ENCODE measurements at regions of chr16 and their contacts with region 1.

Region 1: DNA sequence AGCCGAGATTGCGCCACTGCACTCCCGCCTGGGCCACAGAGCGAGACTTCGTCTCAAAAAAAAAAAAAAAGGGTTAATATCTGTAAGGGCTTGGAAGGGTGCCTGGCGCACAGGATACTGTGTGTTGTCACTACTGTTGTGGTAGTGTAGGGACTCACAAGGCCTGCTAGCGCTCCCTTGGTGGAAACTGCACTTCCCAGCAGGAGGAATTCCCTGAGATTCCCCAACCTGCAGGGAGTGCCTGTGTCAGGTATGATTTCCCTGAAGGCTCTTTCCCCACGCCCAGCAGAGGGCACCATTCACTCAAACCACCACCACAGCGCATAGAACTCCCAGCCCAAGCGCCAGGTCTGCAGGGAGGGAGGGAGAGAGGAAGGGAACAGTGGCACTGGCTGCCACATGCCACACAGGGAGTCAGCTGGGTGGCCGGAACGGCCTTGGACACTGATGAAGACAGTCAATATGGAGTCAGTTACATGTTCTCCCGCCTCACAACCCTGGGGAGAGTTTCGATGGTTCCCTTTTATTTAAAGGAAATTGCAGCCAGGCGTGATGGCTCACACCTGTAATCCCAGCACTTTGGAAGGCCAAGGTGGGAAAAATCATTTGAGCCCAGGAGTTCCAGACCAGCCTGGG is 32.7 kb upstream of the CDH1 start:
- DNase-seq: peak; percentile 87
- H3K4me3 Mint-ChIP-seq: no peak overlapping the region
- H3K27ac Mint-ChIP-seq: no peak overlapping the region
- H3K4me1 Mint-ChIP-seq: peaks cover 2% of the 10 kb centered on the region
- H3K27me3 Mint-ChIP-seq: no peaks in the 10 kb centered on the region

Region 2: DNA sequence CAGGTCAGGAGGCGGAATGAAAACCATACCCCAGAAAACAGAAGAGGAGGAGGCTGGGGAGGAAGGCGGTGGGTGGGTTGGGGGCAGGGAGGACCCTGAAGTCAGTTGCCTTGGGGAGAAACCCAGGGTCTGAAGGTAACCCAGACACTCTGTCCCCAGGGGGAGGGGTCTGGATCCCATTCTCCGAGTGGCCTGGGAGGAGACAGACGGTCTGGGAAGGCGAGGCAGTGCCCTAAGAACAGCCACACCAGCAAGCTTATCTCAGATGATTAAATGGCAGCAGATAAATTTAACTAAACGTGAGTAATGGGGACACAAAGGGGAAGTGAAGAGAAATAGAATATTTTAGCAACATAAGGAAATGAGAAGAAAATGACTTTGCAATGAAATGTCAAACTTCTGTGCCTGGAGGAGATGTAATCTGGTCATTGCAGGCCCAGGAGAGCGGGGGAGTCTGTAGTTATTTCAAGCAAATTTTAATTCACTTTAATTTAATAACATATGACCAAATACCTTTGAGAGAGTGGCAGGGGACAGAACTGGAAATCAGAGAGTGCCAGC is 186.7 kb before region 1 on chr16:
- intact Hi-C with region 1: no loop called
- DNase-seq: no peak
- H3K4me3 Mint-ChIP-seq: no peak overlapping the region
- H3K27ac Mint-ChIP-seq: no peak overlapping the region
- H3K4me1 Mint-ChIP-seq: peaks cover 6% of the 10 kb centered on the region
- H3K27me3 Mint-ChIP-seq: peaks cover 14% of the 10 kb centered on the region

Region 3: DNA sequence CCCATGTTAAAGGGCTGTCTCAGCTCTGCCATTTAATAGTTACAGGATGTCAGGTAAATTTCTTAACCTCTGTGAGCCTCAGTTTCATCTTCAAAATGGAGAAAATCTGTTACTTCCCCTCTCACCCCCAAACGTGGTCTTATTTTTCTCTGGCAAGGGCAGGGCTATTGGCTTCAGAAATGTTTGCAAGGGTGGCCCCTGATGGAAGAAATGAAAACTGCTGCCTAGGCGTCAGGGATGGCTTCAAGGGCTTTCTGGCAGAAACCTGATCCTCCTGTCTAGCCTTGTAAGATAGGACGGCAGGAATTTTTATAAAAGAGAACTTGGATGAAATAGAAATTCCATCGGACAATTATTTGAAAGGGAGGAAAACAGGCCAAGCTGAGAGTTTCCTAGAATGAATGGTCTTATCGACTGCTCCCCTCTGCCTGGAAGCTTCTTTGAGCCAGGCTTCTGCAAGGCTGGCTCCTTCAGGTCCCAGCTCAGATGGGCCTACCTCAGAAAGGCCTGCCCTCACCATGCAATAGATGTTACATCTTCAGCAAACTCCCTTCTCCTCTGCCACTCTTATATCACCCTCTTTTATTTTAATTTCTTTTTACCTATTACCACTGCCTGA is 96.0 kb after region 1 on chr16:
- intact Hi-C with region 1: loop called (anchors 1 kb)
- DNase-seq: peak; percentile 87
- H3K4me3 Mint-ChIP-seq: no peak overlapping the region
- H3K27ac Mint-ChIP-seq: no peak overlapping the region
- H3K4me1 Mint-ChIP-seq: no peaks in the 10 kb centered on the region
- H3K27me3 Mint-ChIP-seq: peaks cover 1% of the 10 kb centered on the region

Region 4: DNA sequence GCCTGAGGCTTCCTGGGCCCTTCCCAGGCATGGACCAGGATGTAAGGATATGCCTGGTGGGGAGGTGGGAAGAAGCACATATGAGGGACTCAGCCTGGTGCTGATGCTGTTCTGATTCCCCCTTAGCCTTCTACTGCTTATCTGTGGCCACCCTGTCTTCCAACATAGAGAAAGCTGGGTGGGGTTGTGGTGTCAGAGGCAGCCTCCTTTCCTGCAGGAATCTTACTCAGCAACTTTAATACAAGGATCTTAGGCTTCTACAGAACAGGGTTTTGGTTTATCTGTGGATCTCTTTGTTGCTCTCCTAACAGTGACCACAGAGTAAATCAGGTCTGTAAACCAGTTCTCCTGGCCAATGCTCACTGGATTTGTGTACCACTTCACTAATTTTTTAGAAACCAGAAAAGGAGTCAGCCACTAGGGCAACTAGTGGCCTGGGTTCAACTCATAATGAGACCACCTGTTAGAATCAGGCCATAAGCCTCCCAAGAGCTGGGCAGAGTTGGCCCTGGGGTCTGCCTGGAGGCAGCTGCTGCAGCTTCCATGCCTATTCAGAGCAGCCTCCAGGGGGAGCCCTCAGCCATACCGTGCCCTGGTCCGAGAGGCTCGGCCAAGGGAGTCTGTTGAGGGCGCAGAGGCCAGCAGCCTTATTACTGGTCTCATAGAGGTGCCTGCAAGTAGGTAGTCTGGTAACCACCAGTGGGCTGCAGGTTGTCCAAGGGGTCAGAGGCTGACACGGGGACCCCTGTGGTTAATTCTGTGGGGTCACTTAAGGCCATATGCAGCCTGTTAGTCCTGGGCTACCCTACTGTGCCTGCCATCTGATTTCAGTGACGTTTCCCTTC is 408.2 kb after region 1 on chr16:
- intact Hi-C with region 1: loop called (anchors 10 kb)
- DNase-seq: peak; percentile 84
- H3K4me3 Mint-ChIP-seq: no peak overlapping the region
- H3K27ac Mint-ChIP-seq: no peak overlapping the region
- H3K4me1 Mint-ChIP-seq: peaks cover 2% of the 10 kb centered on the region
- H3K27me3 Mint-ChIP-seq: peaks cover 13% of the 10 kb centered on the region

Measured in activated CD4-positive, alpha-beta T cell treated with anti-CD3 and anti-CD28 coated beads, Interleukin-2, amount 10 ng/mL, durations not matched to agents 24 days and 14 days (primary cell).